Activated CD8-positive, alpha-beta T cell treated with anti-CD3 and anti-CD28 coated beads for 36 hours (primary cell): ENCODE measurements at regions of chr21 and their contacts with region 1.

Region 1: DNA sequence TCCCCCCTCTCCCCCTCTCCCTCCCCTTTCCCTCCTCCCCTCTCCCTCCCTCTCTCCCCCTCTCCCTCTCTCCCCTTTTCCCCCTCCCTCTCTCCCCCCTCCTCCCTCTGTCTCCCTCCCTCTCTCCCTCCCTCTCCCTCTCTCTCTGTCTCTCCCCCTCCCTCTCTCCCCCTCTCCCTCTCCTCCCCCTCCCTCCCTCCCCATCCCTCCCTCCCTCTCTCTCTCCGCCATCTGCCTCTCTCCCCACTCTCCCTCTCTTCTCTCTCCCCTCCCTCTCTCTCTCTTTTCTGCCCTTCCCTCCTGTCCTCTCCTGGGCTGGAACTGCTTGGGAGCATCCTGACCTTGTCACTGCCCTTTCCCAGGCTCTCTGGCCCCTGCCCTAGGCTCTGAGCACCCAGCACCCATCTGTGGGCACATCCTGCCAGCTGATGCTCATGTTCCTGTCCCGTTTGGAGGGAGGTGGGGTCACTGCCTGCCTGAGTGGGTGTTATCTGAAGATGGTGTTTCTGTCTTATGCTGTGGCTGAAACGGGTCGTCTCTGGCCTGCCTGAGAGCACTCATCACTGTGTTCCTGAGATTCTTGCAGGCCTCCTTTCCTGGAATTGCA is 10.8 kb downstream of the FTCD start:
- DNase-seq: peak; percentile 65
- ATAC-seq: no peak
- H3K4me3 Mint-ChIP-seq: no peak overlapping the region
- H3K27ac Mint-ChIP-seq: peak overlapping the region; percentile 85
- H3K4me1 Mint-ChIP-seq: peaks cover 12% of the 10 kb centered on the region
- H3K27me3 Mint-ChIP-seq: no peaks in the 10 kb centered on the region
- CTCF ChIP-seq: no peak

Region 2: GRCh38 chr21:45439161-45439872 is 705.2 kb before region 1 on chr21:
- CTCF ChIA-PET with region 1: no interaction called
- POLR2A ChIA-PET with region 1: no interaction called
- intact Hi-C with region 1: no loop called
- DNase-seq: peak; percentile 89
- ATAC-seq: peak; percentile 90
- H3K4me3 Mint-ChIP-seq: peak overlapping the region; percentile 49
- H3K27ac Mint-ChIP-seq: peak overlapping the region; percentile 5
- H3K4me1 Mint-ChIP-seq: no peaks in the 10 kb centered on the region
- H3K27me3 Mint-ChIP-seq: peaks cover 2% of the 10 kb centered on the region
- CTCF ChIP-seq: peak; percentile 95

Region 3: GRCh38 chr21:45973659-45974072 is 170.9 kb before region 1 on chr21:
- CTCF ChIA-PET with region 1: interaction called, 50 read pairs
- POLR2A ChIA-PET with region 1: interaction called, 15 read pairs
- intact Hi-C with region 1: no loop called
- DNase-seq: peak; percentile 96
- ATAC-seq: peak; percentile 84
- H3K4me3 Mint-ChIP-seq: peak overlapping the region; percentile 64
- H3K27ac Mint-ChIP-seq: peak overlapping the region; percentile 82
- H3K4me1 Mint-ChIP-seq: peaks cover 26% of the 10 kb centered on the region
- H3K27me3 Mint-ChIP-seq: peaks cover 15% of the 10 kb centered on the region
- CTCF ChIP-seq: peak; percentile 81

Region 4: DNA sequence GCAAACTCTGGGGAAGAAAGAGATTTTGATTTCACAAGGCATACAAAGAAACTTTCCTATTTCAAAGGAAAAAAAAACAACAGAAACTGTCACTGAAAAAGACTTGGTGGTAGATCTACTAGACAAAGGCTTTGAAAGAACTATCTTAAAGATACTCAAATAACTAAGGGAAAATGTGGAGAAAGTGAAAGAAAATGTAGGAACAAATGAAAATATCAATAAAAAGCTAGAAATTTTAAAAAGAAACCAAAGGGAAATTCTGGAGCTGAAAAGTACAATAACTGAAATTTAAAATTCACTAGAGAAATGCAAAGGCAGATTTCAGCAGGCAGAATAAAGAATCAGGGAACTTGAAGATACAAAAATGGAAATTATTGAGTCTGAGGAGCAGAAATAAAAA is 40.5 kb before region 1 on chr21:
- CTCF ChIA-PET with region 1: interaction called, 10 read pairs
- POLR2A ChIA-PET with region 1: no interaction called
- intact Hi-C with region 1: no loop called
- DNase-seq: no peak
- ATAC-seq: no peak
- H3K4me3 Mint-ChIP-seq: no peak overlapping the region
- H3K27ac Mint-ChIP-seq: no peak overlapping the region
- H3K4me1 Mint-ChIP-seq: peaks cover 15% of the 10 kb centered on the region
- H3K27me3 Mint-ChIP-seq: peaks cover 9% of the 10 kb centered on the region
- CTCF ChIP-seq: no peak

Region 5: DNA sequence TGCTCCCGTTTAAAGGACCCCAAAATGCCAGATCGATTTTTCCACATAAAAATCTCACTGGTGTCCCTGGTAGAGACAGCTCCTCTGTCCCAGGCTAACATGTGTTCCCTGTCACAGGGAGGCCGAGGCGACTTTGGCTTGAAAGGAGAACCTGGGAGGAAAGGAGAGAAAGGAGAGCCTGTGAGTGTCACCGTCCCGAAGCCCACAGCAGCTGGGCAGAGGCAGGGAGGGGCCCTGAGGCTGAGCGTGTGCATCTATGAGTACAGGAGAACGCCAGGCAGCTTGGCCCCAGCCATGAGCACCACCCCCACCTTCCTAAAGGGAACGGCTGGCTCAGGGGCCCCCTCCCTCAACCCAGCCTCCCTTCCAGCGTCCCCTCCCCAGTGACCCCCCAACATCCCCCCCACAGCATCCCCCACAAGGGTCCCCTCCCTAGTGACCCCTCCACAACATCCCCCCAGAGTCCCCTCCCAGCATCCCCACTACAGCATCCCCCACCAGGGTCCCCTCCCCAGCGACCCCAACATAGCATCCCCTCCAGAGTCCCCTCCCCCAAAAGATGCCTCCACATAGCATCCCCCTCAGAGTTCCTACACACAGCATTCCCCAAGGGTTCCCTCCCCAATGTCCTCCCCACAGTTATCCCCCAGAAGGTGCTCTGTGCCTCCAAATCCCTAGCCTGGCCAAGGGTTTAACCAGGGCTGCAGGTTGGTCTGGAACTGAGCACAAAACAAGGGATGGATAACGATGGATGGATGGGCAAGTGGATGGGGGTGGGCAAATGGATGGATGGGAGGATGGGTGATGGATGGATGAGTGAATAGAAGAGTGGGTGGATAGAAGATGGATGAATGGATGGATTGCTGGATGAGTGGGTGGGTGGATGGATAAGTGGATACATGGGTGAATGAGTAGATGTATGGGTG is 21.5 kb before region 1 on chr21:
- CTCF ChIA-PET with region 1: no interaction called
- POLR2A ChIA-PET with region 1: no interaction called
- intact Hi-C with region 1: no loop called
- DNase-seq: no peak
- ATAC-seq: no peak
- H3K4me3 Mint-ChIP-seq: no peak overlapping the region
- H3K27ac Mint-ChIP-seq: no peak overlapping the region
- H3K4me1 Mint-ChIP-seq: no peaks in the 10 kb centered on the region
- H3K27me3 Mint-ChIP-seq: no peaks in the 10 kb centered on the region
- CTCF ChIP-seq: no peak

Region 6: DNA sequence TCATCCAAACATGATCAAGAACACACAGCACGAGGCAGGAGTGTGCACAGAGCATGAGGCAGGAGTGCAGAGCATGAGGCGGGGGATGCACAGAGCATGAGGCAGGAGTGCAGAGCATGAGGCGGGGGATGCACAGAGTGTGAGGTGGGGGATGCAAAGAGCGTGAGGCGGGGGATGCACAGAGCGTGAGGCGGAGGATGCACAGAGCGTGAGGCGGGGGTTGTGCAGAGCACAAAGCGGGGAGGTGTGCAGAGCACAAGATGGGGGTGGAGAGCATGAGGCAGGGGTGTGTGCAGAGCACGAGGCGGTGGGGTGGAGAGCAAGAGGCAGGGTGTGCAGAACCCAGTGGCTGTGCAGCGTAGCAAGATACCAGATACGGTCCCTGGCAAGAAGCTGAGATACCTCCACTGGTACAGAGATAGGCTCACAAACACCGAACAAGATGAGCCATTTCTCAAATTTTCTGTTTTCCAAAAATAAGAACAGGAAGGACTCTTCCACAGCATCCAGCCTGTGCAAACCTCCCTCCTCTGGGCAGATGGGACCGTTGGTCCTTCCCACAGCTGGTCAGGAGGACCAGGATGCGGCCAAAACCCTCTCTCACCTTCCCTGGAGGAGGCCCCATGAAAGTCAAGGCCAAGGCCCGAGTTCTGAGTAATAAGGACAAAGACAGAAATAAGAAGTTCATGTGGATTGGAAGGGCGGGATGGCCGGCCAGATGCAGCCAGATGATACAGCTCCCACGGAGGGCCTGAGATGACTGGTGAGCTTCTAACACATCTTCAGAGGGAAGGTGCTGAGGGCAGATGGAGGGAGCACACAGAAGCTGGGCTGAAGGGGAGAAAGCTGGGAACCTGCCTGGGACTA is 27.7 kb after region 1 on chr21:
- CTCF ChIA-PET with region 1: interaction called, 11 read pairs
- POLR2A ChIA-PET with region 1: no interaction called
- intact Hi-C with region 1: no loop called
- DNase-seq: no peak
- ATAC-seq: no peak
- H3K4me3 Mint-ChIP-seq: no peak overlapping the region
- H3K27ac Mint-ChIP-seq: no peak overlapping the region
- H3K4me1 Mint-ChIP-seq: peaks cover 6% of the 10 kb centered on the region
- H3K27me3 Mint-ChIP-seq: no peaks in the 10 kb centered on the region
- CTCF ChIP-seq: no peak

Region 7: GRCh38 chr21:46210378-46211136 is 66.0 kb after region 1 on chr21:
- CTCF ChIA-PET with region 1: no interaction called
- POLR2A ChIA-PET with region 1: no interaction called
- intact Hi-C with region 1: no loop called
- DNase-seq: no peak
- ATAC-seq: no peak
- H3K4me3 Mint-ChIP-seq: no peak overlapping the region
- H3K27ac Mint-ChIP-seq: no peak overlapping the region
- H3K4me1 Mint-ChIP-seq: no peaks in the 10 kb centered on the region
- H3K27me3 Mint-ChIP-seq: no peaks in the 10 kb centered on the region
- CTCF ChIP-seq: no peak